ENCODE measurements at regions of chr2 and their contacts with region 1.

Region 1: GRCh38 chr2:196220671-196221070 is 49.3 kb upstream of the STK17B start:
- DNase-seq: peak in 7 of 10 donors; percentile 25 to 76 (median 57)
- ATAC-seq: peak; percentile 91 to 97
- H3K4me3 Mint-ChIP-seq: peak overlapping the region; percentile 13 to 70 (median 52)
- H3K27ac Mint-ChIP-seq: peak overlapping the region; percentile 46 to 89 (median 85)
- H3K4me1 Mint-ChIP-seq: peaks cover 32 to 79% (median 75%) of the 10 kb centered on the region in 4 donors
- H3K27me3 Mint-ChIP-seq: no peaks in the 10 kb centered on the region

Region 2: GRCh38 chr2:196076778-196077568 is 143.7 kb before region 1 on chr2:
- POLR2A ChIA-PET with region 1: interaction called, 18 read pairs
- DNase-seq: no peak
- ATAC-seq: no peak
- H3K4me3 Mint-ChIP-seq: no peak overlapping the region
- H3K27ac Mint-ChIP-seq: no peak overlapping the region
- H3K4me1 Mint-ChIP-seq: peaks cover 8 to 31% (median 22%) of the 10 kb centered on the region in 4 donors
- H3K27me3 Mint-ChIP-seq: no peaks in the 10 kb centered on the region

Region 3: GRCh38 chr2:196160101-196160500 is 60.6 kb before region 1 on chr2:
- POLR2A ChIA-PET with region 1: interaction called, 50 read pairs
- DNase-seq: peak in 9 of 10 donors; percentile 60 to 92 (median 84)
- ATAC-seq: peak; percentile 44 to 65
- H3K4me3 Mint-ChIP-seq: peak overlapping the region; percentile 63 to 96 (median 84)
- H3K27ac Mint-ChIP-seq: peak overlapping the region; percentile 89 to 100 (median 97)
- H3K4me1 Mint-ChIP-seq: peaks cover 13 to 90% (median 62%) of the 10 kb centered on the region in 4 donors
- H3K27me3 Mint-ChIP-seq: no peaks in the 10 kb centered on the region

Region 4: DNA sequence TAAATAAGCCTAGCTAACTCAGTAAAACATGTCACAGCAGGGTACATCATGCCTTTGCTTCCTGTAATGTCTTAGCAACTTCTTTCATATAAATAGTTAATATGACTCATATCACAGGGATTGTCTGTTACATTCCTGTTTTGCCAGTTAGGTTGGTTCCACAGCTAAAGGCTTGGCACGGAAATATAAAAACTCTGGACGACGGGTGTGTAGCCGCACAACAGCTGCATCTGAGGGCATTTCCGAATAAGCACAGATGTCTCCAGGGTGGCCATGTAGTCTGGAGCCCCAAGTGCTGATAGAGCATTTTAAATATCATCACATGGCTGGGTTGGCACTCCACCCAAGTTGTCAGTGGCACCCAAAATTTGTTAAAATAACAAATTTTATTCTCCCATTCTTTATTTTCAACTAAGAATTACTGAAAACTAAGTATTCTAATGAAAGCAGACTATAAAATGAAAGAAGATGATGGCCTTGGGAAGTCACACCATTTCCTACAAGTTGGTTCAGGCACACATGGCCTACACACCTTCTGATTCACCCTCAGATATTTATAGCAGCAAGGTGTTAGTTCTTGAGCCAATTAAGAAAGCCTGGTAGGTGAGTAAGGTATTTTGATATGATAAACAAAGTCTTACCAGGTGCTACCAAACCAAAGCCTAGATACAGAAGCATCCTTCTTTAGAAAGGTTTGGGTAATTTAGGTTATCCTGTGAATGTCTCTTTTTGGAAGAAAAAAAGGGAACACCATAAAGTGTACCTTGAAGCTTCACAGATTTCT is 12.5 kb after region 1 on chr2:
- POLR2A ChIA-PET with region 1: interaction called, 62 read pairs
- DNase-seq: no peak
- ATAC-seq: peak in 1 of 2 donors; percentile 10
- H3K4me3 Mint-ChIP-seq: peak overlapping the region in 6 of 10 donors; percentile 4 to 59 (median 43)
- H3K27ac Mint-ChIP-seq: peak overlapping the region; percentile 87 to 100 (median 96)
- H3K4me1 Mint-ChIP-seq: peaks cover 26 to 93% (median 86%) of the 10 kb centered on the region in 4 donors
- H3K27me3 Mint-ChIP-seq: no peaks in the 10 kb centered on the region

Region 5: GRCh38 chr2:196239622-196240587 is 19.2 kb after region 1 on chr2:
- POLR2A ChIA-PET with region 1: interaction called, 62 read pairs
- DNase-seq: peak; percentile 36 to 92 (median 82)
- ATAC-seq: peak; percentile 79 to 88
- H3K4me3 Mint-ChIP-seq: peak overlapping the region; percentile 60 to 89 (median 76)
- H3K27ac Mint-ChIP-seq: peak overlapping the region; percentile 90 to 99 (median 97)
- H3K4me1 Mint-ChIP-seq: peaks cover 36 to 88% (median 78%) of the 10 kb centered on the region in 4 donors
- H3K27me3 Mint-ChIP-seq: no peaks in the 10 kb centered on the region

Region 6: GRCh38 chr2:196277002-196277401 is 56.3 kb after region 1 on chr2:
- POLR2A ChIA-PET with region 1: interaction called, 22 read pairs
- DNase-seq: peak in 9 of 10 donors; percentile 12 to 74 (median 51)
- ATAC-seq: peak; percentile 13 to 53
- H3K4me3 Mint-ChIP-seq: peak overlapping the region in 5 of 10 donors; percentile 1 to 79 (median 59)
- H3K27ac Mint-ChIP-seq: peak overlapping the region; percentile 24 to 96 (median 91)
- H3K4me1 Mint-ChIP-seq: peaks cover 27 to 51% (median 40%) of the 10 kb centered on the region in 4 donors
- H3K27me3 Mint-ChIP-seq: no peaks in the 10 kb centered on the region